Activated CD8-positive, alpha-beta T cell treated with anti-CD3 and anti-CD28 coated beads, Interleukin-2, amount 10 ng/mL, durations not matched to agents 7 days and 5 days (primary cell): ENCODE measurements at regions of chr4 and their contacts with region 1.

Region 1: DNA sequence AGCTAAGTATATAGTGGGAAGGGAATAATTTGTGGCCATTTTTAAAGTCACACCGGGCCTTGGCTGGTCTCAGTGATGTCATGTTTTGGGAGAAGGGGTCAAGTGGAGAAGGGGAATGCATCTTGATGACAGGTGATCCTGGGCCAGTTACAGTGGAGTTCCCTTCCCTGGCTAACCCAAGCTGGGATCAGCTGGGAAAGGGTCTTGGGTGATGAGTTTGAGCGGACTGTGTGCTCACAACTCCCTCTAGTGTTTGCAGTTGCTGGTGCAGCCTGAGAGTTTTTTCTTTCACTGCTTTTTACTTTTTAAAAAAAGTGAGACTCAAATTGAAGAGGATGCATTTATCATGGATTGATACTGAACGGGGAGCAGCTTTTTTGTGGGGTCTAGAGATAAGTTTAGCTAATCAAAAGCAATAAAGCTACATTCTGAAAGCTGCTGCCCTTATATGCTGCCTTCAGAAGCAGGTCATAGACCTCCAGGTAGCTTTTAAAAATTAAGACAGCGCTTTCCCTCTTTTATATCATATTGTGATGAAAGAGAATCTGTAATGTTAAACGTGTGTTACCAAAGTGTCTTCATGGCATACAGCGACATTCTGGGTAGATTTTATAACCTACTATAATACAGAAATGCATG is 164.7 kb downstream of the DCLK2 start:
- DNase-seq: no peak
- ATAC-seq: no peak
- H3K4me3 Mint-ChIP-seq: no peak overlapping the region
- H3K27ac Mint-ChIP-seq: no peak overlapping the region
- H3K4me1 Mint-ChIP-seq: no peaks in the 10 kb centered on the region
- H3K27me3 Mint-ChIP-seq: peaks cover 2% of the 10 kb centered on the region

Region 2: DNA sequence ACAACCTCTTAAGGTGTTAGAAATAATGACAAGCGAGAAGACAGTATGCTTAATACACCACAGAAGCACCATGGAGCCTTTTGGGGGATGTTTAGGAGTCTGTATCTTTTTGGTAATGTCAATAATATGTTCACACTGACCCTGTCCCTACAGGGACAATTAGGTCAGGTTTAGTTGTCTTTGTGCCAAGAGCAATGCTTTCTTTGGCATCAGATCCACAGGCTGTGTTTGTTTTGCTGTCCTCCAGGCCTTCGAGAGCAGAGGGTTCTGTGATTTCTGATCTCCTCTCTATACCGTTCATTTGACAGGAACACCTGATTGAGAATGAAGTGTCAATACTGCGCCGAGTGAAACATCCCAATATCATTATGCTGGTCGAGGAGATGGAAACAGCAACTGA is 10.9 kb before region 1 on chr4:
- CTCF ChIA-PET with region 1: interaction called, 13 read pairs
- POLR2A ChIA-PET with region 1: no interaction called
- DNase-seq: no peak
- ATAC-seq: no peak
- H3K4me3 Mint-ChIP-seq: no peak overlapping the region
- H3K27ac Mint-ChIP-seq: no peak overlapping the region
- H3K4me1 Mint-ChIP-seq: no peaks in the 10 kb centered on the region
- H3K27me3 Mint-ChIP-seq: peaks cover 19% of the 10 kb centered on the region